ENCODE measurements at regions of chr6 and their contacts with region 1.

Region 1: DNA sequence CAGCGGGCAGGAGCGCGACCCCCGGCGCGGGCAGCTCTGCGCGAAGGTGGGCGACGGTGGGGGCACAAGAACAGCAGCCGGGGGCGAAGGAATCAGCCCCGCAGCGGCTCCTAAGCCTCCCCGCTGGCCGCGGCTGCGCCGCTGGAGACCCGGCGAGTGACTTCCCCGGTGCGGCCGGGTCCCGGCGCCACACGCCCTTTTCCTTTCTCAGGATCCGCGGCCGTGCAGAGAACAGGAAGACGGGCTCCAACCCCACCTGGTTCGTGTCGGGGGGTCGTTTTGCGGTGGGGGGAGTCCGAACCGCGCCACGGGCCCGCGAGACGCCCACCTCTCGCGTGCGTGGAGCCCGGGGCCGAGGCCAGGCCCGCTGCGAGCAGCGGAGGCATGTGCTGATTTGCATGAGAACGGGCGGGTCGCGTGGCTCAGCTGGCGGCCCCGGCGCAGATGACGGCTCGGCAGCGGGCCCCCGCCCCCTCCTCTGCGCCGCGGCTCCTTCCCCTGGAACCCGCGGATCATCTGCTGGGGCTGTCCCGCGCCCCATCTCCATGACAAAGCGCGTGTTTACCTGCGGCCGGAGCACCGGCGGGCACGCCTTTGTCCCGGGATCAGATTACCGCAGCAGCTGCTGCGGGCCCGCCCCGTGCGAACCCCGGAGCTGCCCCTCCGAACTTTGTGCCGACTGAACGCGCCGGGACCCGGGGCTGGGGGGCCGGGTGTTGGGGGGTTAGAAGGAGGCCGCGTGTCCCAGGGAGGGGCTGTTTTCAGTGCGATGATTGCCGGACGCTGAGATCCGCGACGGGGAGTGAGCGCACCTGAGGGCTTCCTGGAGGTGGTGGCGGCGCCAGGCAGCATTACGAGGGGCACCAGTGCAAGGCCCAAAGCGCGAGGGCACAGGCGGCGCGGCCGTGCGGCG is 4.9 kb upstream of the DLL1 start:
- DNase-seq: peak in 5 of 14 experiments; percentile 22 to 77 (median 55)
- ATAC-seq: peak; percentile 50
- H3K4me3 ChIP-seq: peak overlapping the region; percentile 44
- H3K4me3 Mint-ChIP-seq: peak overlapping the region; percentile 68
- H3K27ac ChIP-seq: no peak overlapping the region
- H3K27ac Mint-ChIP-seq: no peak overlapping the region
- H3K4me1 ChIP-seq: peaks cover 59% of the 10 kb centered on the region
- H3K4me1 Mint-ChIP-seq: peaks cover 38% of the 10 kb centered on the region
- H3K27me3 ChIP-seq: peaks cover 69% of the 10 kb centered on the region in 2 experiments
- H3K27me3 Mint-ChIP-seq: peaks cover 78% of the 10 kb centered on the region
- CTCF ChIP-seq: no peak

Region 2: GRCh38 chr6:169831450-169832246 is 464.1 kb before region 1 on chr6:
- CTCF ChIA-PET with region 1: no interaction called
- POLR2A ChIA-PET with region 1: no interaction called
- intact Hi-C with region 1: loop called in 1 of 2 experiments (anchors 2 kb)
- DNase-seq: peak; percentile 42 to 81 (median 64)
- ATAC-seq: peak; percentile 48
- H3K4me3 ChIP-seq: no peak overlapping the region
- H3K4me3 Mint-ChIP-seq: no peak overlapping the region
- H3K27ac ChIP-seq: no peak overlapping the region
- H3K27ac Mint-ChIP-seq: no peak overlapping the region
- H3K4me1 ChIP-seq: peaks cover 6% of the 10 kb centered on the region
- H3K4me1 Mint-ChIP-seq: no peaks in the 10 kb centered on the region
- H3K27me3 ChIP-seq: peaks cover 13 to 18% of the 10 kb centered on the region in 2 experiments
- H3K27me3 Mint-ChIP-seq: peaks cover 61% of the 10 kb centered on the region
- CTCF ChIP-seq: peak; percentile 82

Region 3: GRCh38 chr6:170087941-170088581 is 207.7 kb before region 1 on chr6:
- CTCF ChIA-PET with region 1: no interaction called
- POLR2A ChIA-PET with region 1: interaction called, 4 read pairs
- intact Hi-C with region 1: loop called in 1 of 2 experiments (anchors 5 kb)
- DNase-seq: peak in 12 of 14 experiments; percentile 21 to 88 (median 52)
- ATAC-seq: peak; percentile 66
- H3K4me3 ChIP-seq: peak overlapping the region; percentile 71
- H3K4me3 Mint-ChIP-seq: peak overlapping the region; percentile 81
- H3K27ac ChIP-seq: peak overlapping the region; percentile 62 to 73
- H3K27ac Mint-ChIP-seq: peak overlapping the region; percentile 78
- H3K4me1 ChIP-seq: peaks cover 40% of the 10 kb centered on the region
- H3K4me1 Mint-ChIP-seq: peaks cover 40% of the 10 kb centered on the region
- H3K27me3 ChIP-seq: no peaks in the 10 kb centered on the region
- H3K27me3 Mint-ChIP-seq: no peaks in the 10 kb centered on the region
- CTCF ChIP-seq: no peak

Region 4: DNA sequence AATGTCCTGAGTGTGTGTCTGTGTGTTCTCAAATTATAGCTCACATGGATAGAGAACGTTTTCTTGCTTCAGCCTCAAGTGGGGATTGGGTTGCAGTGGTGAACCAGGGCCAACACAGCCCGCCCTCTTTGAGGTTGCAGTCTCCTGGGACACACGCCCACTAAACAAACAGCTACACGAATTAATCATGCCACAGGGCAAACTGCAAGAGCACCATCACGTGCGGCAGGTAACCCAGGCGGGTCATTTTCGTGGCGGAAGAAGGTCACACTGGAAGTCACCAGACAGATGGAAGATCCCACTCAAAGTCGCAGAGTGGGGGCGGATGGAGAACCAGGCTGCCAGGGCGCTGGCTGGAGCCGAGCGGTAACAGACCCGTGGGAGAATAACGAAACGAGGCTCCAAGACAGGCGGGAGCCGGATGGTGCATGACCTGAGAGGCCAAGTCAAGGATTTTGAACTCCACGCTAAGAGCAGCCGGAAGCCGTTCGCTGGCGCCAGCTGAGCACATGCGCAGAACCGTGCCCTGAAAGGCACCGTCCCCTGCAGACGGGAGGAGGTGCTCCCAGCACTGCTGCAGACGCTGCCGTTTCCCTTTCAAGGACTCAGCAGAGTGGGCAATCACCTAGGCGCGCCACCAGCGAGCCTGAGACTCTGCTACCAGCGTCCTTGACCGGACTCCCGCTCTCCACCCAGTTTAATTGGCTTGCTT is 15.6 kb before region 1 on chr6:
- CTCF ChIA-PET with region 1: no interaction called
- POLR2A ChIA-PET with region 1: interaction called, 22 read pairs
- intact Hi-C with region 1: no loop called
- DNase-seq: peak in 9 of 14 experiments; percentile 39 to 83 (median 59)
- ATAC-seq: peak; percentile 87
- H3K4me3 ChIP-seq: peak overlapping the region; percentile 54
- H3K4me3 Mint-ChIP-seq: peak overlapping the region; percentile 90
- H3K27ac ChIP-seq: peak overlapping the region in 1 of 2 donors; percentile 17
- H3K27ac Mint-ChIP-seq: peak overlapping the region; percentile 92
- H3K4me1 ChIP-seq: peaks cover 31% of the 10 kb centered on the region
- H3K4me1 Mint-ChIP-seq: peaks cover 42% of the 10 kb centered on the region
- H3K27me3 ChIP-seq: no peaks in the 10 kb centered on the region
- H3K27me3 Mint-ChIP-seq: peaks cover 2% of the 10 kb centered on the region
- CTCF ChIP-seq: no peak

Measured in CD4-positive, alpha-beta T cell (primary cell).